Activated CD8-positive, alpha-beta T cell treated with anti-CD3 and anti-CD28 coated beads for 36 hours (primary cell): ENCODE measurements at regions of chr4 and their contacts with region 1.

Region 1: GRCh38 chr4:67746797-67747495 is 7.2 kb downstream of the GNRHR start:
- DNase-seq: peak; percentile 14
- ATAC-seq: peak; percentile 77
- H3K4me3 Mint-ChIP-seq: no peak overlapping the region
- H3K27ac Mint-ChIP-seq: peak overlapping the region; percentile 78
- H3K4me1 Mint-ChIP-seq: peaks cover 14% of the 10 kb centered on the region
- H3K27me3 Mint-ChIP-seq: no peaks in the 10 kb centered on the region
- CTCF ChIP-seq: peak; percentile 72

Region 2: DNA sequence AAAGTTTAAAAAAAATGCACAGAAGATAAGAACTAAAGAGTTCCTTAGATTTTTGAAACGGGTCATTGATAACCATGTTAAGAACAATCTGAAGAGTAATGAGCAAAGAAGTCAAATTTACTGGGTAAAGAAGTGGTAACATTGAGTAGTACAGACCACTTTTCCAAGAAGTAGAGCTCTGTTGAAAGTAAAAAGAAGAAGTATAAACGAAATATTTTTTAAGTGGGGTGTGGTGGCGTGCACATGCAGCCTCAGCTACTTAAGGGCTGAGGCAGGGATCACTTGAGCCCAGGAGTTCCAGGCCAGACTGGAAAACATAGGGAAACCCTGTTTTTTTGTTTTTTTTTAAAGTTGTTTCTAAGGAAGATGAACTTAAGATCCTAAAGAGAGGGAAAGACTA is 114.5 kb before region 1 on chr4:
- CTCF ChIA-PET with region 1: no interaction called
- POLR2A ChIA-PET with region 1: no interaction called
- intact Hi-C with region 1: no loop called
- DNase-seq: no peak
- ATAC-seq: no peak
- H3K4me3 Mint-ChIP-seq: no peak overlapping the region
- H3K27ac Mint-ChIP-seq: no peak overlapping the region
- H3K4me1 Mint-ChIP-seq: no peaks in the 10 kb centered on the region
- H3K27me3 Mint-ChIP-seq: no peaks in the 10 kb centered on the region
- CTCF ChIP-seq: no peak

Region 3: GRCh38 chr4:67700738-67701516 is 46.0 kb before region 1 on chr4 and contains the start of gene UBA6:
- CTCF ChIA-PET with region 1: interaction called, 23 read pairs
- POLR2A ChIA-PET with region 1: no interaction called
- intact Hi-C with region 1: no loop called
- DNase-seq: peak; percentile 97
- ATAC-seq: peak; percentile 98
- H3K4me3 Mint-ChIP-seq: peak within 1 kb of the TSS; percentile 83
- H3K27ac Mint-ChIP-seq: peak within 1 kb of the TSS; percentile 97
- H3K4me1 Mint-ChIP-seq: peaks cover 57% of the 10 kb centered on the region
- H3K27me3 Mint-ChIP-seq: no peaks in the 10 kb centered on the region
- CTCF ChIP-seq: peak; percentile 43
- total RNA-seq, gene UBA6: 81.2 to 87.5 TPM

Region 4: GRCh38 chr4:67736262-67736661 is 10.7 kb before region 1 on chr4:
- CTCF ChIA-PET with region 1: interaction called, 11 read pairs
- POLR2A ChIA-PET with region 1: no interaction called
- intact Hi-C with region 1: no loop called
- DNase-seq: no peak
- ATAC-seq: no peak
- H3K4me3 Mint-ChIP-seq: no peak overlapping the region
- H3K27ac Mint-ChIP-seq: no peak overlapping the region
- H3K4me1 Mint-ChIP-seq: no peaks in the 10 kb centered on the region
- H3K27me3 Mint-ChIP-seq: no peaks in the 10 kb centered on the region
- CTCF ChIP-seq: no peak